CD4-positive, alpha-beta T cell (primary cell): ENCODE measurements at regions of chr3 and their contacts with region 1.

Region 1: DNA sequence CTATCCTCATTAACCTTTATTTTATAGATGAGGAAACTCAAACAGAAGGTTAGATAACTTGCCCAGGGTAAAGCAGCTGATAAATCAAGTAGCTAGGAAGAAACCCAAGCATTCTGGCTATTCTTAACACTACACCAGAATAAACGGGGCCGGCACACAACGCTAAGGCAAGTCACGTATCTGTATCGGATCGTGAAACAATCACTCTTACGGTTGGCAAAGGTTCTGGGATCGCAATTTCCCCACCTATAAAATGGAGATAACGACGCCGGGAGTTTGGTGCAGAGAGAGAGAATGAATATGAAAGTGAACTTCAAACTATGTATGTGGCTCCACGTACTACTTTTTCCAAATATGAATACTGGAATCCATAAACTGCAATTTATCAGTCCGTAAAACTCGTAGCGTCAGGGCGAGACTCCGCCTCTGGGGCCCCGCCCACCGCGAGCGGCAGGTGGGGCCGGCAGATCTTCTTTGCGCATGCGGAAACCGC is 252 bp upstream of the ARMC8 start:
- DNase-seq: peak; percentile 78 to 95 (median 88)
- ATAC-seq: peak; percentile 92
- H3K4me3 ChIP-seq: peak overlapping the region; percentile 91
- H3K4me3 Mint-ChIP-seq: peak overlapping the region; percentile 97
- H3K27ac ChIP-seq: peak overlapping the region; percentile 72 to 83
- H3K27ac Mint-ChIP-seq: peak overlapping the region; percentile 92
- H3K4me1 ChIP-seq: peaks cover 16% of the 10 kb centered on the region
- H3K4me1 Mint-ChIP-seq: peaks cover 46% of the 10 kb centered on the region
- H3K27me3 ChIP-seq: peaks cover 0 to 8% of the 10 kb centered on the region in 2 experiments
- H3K27me3 Mint-ChIP-seq: peaks cover 4% of the 10 kb centered on the region
- CTCF ChIP-seq: no peak

Region 2: GRCh38 chr3:138051946-138052802 is 134.7 kb before region 1 on chr3:
- CTCF ChIA-PET with region 1: no interaction called
- POLR2A ChIA-PET with region 1: no interaction called
- intact Hi-C with region 1: no loop called
- DNase-seq: peak in 2 of 14 experiments; percentile 7 to 8
- ATAC-seq: no peak
- H3K4me3 ChIP-seq: no peak overlapping the region
- H3K4me3 Mint-ChIP-seq: no peak overlapping the region
- H3K27ac ChIP-seq: no peak overlapping the region
- H3K27ac Mint-ChIP-seq: no peak overlapping the region
- H3K4me1 ChIP-seq: no peaks in the 10 kb centered on the region
- H3K4me1 Mint-ChIP-seq: no peaks in the 10 kb centered on the region
- H3K27me3 ChIP-seq: peaks cover 6 to 23% of the 10 kb centered on the region in 2 experiments
- H3K27me3 Mint-ChIP-seq: peaks cover 34% of the 10 kb centered on the region
- CTCF ChIP-seq: no peak

Region 3: GRCh38 chr3:138174421-138175122 is 12.3 kb before region 1 on chr3 and contains the start of gene DBR1:
- CTCF ChIA-PET with region 1: interaction called, 3 read pairs
- POLR2A ChIA-PET with region 1: interaction called, 45 read pairs
- intact Hi-C with region 1: loop called in 1 of 2 experiments (anchors 2 kb)
- DNase-seq: peak; percentile 55 to 89 (median 66)
- ATAC-seq: peak; percentile 86
- H3K4me3 ChIP-seq: peak within 1 kb of the TSS; percentile 68
- H3K4me3 Mint-ChIP-seq: peak within 1 kb of the TSS; percentile 98
- H3K27ac ChIP-seq: peak within 1 kb of the TSS; percentile 66 to 79
- H3K27ac Mint-ChIP-seq: peak within 1 kb of the TSS; percentile 96
- H3K4me1 ChIP-seq: peaks cover 19% of the 10 kb centered on the region
- H3K4me1 Mint-ChIP-seq: peaks cover 48% of the 10 kb centered on the region
- H3K27me3 ChIP-seq: no peaks in the 10 kb centered on the region
- H3K27me3 Mint-ChIP-seq: no peaks in the 10 kb centered on the region
- CTCF ChIP-seq: no peak
- total RNA-seq, gene DBR1: 23.1 to 24.6 TPM

Region 4: GRCh38 chr3:138222131-138222941 is 35.5 kb after region 1 on chr3:
- CTCF ChIA-PET with region 1: interaction called, 3 read pairs
- POLR2A ChIA-PET with region 1: interaction called, 3 read pairs
- intact Hi-C with region 1: loop called in 1 of 2 experiments (anchors 5 kb)
- DNase-seq: peak in 3 of 14 experiments; percentile 10 to 15 (median 13)
- ATAC-seq: no peak
- H3K4me3 ChIP-seq: no peak overlapping the region
- H3K4me3 Mint-ChIP-seq: no peak overlapping the region
- H3K27ac ChIP-seq: no peak overlapping the region
- H3K27ac Mint-ChIP-seq: peak overlapping the region; percentile 45
- H3K4me1 ChIP-seq: peaks cover 3% of the 10 kb centered on the region
- H3K4me1 Mint-ChIP-seq: peaks cover 50% of the 10 kb centered on the region
- H3K27me3 ChIP-seq: no peaks in the 10 kb centered on the region
- H3K27me3 Mint-ChIP-seq: no peaks in the 10 kb centered on the region
- CTCF ChIP-seq: no peak

Region 5: DNA sequence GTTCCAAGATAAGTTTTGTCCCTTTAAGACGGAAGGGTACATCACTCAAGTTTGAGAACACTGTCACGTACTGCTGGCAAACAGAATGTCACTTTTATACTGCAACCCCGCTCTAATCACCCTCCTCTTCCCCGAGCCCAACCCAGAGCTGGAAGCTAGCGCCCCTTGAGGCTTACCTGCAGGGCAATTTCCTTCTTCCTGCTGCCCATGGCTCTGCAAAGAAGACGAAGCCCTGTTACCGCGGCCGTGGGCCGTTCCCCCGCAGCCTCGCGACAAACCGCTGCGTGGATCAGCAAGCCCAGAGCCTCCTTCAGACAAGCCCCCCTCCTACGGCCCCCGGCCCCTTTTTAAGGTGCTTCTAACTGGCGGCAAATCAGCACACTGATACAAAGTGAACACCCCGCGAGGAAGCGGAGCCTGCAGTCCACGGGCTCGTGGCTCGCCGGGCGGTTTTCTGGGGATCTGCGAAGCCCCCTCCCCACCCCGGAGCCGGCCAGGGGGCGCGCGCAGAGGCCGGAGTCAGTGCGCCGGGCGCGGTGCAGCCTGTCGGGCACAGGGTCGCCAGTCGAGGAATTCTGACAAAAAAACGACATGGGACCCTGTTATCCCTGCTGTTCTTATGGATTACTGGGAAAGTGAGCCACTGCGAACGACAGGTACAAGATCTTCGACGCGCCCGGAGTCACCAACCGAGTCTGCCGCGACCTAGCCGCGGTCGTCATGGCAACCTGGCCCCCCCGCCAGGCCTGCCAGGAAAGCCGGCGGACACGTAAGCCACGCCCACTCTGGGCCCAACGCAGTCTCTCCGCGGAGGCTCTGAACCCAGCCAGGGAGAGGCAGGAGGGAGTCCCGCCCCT is 142.5 kb after region 1 on chr3 and contains the start of gene NME9:
- CTCF ChIA-PET with region 1: no interaction called
- POLR2A ChIA-PET with region 1: interaction called, 3 read pairs
- intact Hi-C with region 1: loop called (anchors 2 to 5 kb)
- DNase-seq: peak; percentile 80 to 97 (median 90)
- ATAC-seq: peak; percentile 85
- H3K4me3 ChIP-seq: peak within 1 kb of the TSS; percentile 69
- H3K4me3 Mint-ChIP-seq: peak within 1 kb of the TSS; percentile 98
- H3K27ac ChIP-seq: peak within 1 kb of the TSS; percentile 49 to 81
- H3K27ac Mint-ChIP-seq: peak within 1 kb of the TSS; percentile 88
- H3K4me1 ChIP-seq: peaks cover 20% of the 10 kb centered on the region
- H3K4me1 Mint-ChIP-seq: peaks cover 37% of the 10 kb centered on the region
- H3K27me3 ChIP-seq: no peaks in the 10 kb centered on the region
- H3K27me3 Mint-ChIP-seq: no peaks in the 10 kb centered on the region
- CTCF ChIP-seq: peak; percentile 71
- total RNA-seq, gene NME9: 0.80 TPM in 1 of 2 experiments, not detected in the other

Region 6: DNA sequence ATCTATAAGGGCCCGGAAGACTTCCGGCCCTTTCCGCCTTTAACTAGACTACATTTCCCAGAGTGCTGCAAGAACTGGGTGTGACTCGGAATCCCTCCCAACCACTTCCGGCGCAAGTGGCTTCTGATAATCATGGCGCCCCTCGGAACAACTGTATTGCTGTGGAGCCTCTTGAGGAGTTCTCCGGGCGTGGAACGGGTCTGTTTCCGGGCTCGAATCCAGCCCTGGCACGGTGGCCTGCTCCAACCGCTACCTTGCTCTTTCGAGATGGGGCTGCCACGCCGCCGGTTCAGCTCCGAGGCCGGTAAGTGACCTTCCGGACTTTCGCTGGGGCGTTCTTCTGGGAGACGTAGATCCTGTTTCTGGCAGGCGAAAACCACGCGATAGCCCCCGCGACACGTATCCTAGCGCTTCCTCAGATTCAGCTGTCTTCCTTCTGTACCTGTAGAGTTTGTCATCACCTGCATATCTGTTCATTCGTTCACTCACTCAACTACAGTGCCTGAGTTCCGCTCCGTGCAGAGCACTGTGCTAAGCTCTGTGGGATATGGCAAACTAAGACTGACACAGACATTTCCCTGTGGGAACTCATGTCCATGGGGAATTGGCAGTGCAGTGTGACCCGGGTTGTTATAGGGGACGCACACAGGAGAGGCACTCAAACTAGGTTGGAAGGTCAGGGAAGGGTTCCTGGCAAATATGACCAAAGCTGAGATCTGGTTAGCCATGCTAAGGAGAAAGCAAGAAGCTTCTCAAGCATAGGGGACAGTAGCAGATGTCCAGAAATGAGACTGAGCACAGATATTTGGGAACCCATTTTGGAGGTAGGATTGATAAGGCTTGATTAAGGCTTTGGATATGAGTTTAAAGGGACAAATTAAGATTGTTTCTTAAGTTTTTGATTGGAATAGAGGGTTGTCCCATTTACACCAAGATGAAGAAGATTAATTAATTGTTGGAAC is 1157.3 kb after region 1 on chr3 and contains the start of gene MRPS22:
- CTCF ChIA-PET with region 1: no interaction called
- POLR2A ChIA-PET with region 1: no interaction called
- intact Hi-C with region 1: loop called in 1 of 2 experiments (anchors 5 kb)
- DNase-seq: peak; percentile 64 to 92 (median 75)
- ATAC-seq: peak; percentile 98
- H3K4me3 ChIP-seq: peak within 1 kb of the TSS; percentile 92
- H3K4me3 Mint-ChIP-seq: no peak within 1 kb of the TSS
- H3K27ac ChIP-seq: peak within 1 kb of the TSS; percentile 73 to 93
- H3K27ac Mint-ChIP-seq: no peak within 1 kb of the TSS
- H3K4me1 ChIP-seq: peaks cover 21% of the 10 kb centered on the region
- H3K4me1 Mint-ChIP-seq: peaks cover 5% of the 10 kb centered on the region
- H3K27me3 ChIP-seq: no peaks in the 10 kb centered on the region
- H3K27me3 Mint-ChIP-seq: peaks cover 8% of the 10 kb centered on the region
- CTCF ChIP-seq: no peak
- total RNA-seq, gene MRPS22: 39.6 to 42.6 TPM

Region 7: DNA sequence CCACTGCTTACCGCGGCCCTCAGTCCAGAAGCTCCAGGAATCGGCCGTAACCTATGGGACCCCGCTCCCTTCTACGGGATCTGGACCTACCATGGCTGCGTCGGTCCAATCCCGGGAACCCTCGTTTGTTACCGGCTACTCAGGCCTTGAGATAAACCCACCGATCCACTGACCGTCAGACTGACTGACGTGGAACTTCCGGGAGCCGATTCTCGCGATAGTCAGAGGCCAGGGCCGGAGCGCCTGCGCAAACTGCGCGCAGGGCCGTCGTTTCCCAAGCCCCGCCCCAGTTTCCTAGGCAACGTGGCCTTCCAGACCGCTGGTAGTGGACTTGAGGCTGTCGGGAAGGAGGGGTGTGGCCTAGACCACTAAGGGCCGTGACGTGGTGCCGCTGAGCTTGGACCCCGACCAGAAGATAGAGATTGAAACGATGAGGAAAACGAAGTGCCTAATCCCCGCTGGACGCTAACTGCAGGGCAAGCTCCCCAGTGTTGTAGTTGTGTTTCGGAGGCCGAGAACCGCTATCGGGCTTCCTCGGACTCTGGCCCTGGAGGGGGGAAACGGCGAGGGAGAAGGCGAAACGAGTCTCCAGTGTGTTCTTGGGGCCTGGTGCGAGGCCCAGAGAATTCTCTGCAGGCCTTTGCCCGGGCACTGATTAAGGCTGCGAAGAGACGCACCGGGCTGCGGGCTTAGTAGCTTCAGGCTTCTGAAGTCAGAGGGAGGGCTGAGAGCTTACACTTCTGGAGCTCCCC is 1202.8 kb after region 1 on chr3 and contains the start of gene COPB2:
- CTCF ChIA-PET with region 1: no interaction called
- POLR2A ChIA-PET with region 1: no interaction called
- intact Hi-C with region 1: loop called in 1 of 2 experiments (anchors 5 kb)
- DNase-seq: peak; percentile 82 to 97 (median 94)
- ATAC-seq: peak; percentile 82
- H3K4me3 ChIP-seq: peak within 1 kb of the TSS; percentile 71
- H3K4me3 Mint-ChIP-seq: peak within 1 kb of the TSS; percentile 96
- H3K27ac ChIP-seq: peak within 1 kb of the TSS; percentile 85 to 89
- H3K27ac Mint-ChIP-seq: peak within 1 kb of the TSS; percentile 98
- H3K4me1 ChIP-seq: peaks cover 26% of the 10 kb centered on the region
- H3K4me1 Mint-ChIP-seq: peaks cover 57% of the 10 kb centered on the region
- H3K27me3 ChIP-seq: no peaks in the 10 kb centered on the region
- H3K27me3 Mint-ChIP-seq: no peaks in the 10 kb centered on the region
- CTCF ChIP-seq: no peak
- total RNA-seq, gene COPB2: 13.0 to 13.8 TPM

Region 8: GRCh38 chr3:139677388-139678155 is 1490.7 kb after region 1 on chr3 and contains the start of gene NMNAT3:
- CTCF ChIA-PET with region 1: no interaction called
- POLR2A ChIA-PET with region 1: no interaction called
- intact Hi-C with region 1: loop called in 1 of 2 experiments (anchors 5 kb)
- DNase-seq: peak; percentile 70 to 91 (median 77)
- ATAC-seq: peak; percentile 98
- H3K4me3 ChIP-seq: peak within 1 kb of the TSS; percentile 92
- H3K4me3 Mint-ChIP-seq: peak within 1 kb of the TSS; percentile 88
- H3K27ac ChIP-seq: no peak within 1 kb of the TSS
- H3K27ac Mint-ChIP-seq: no peak within 1 kb of the TSS
- H3K4me1 ChIP-seq: peaks cover 19% of the 10 kb centered on the region
- H3K4me1 Mint-ChIP-seq: peaks cover 13% of the 10 kb centered on the region
- H3K27me3 ChIP-seq: no peaks in the 10 kb centered on the region
- H3K27me3 Mint-ChIP-seq: no peaks in the 10 kb centered on the region
- CTCF ChIP-seq: no peak
- total RNA-seq, gene NMNAT3: 1.5 to 1.9 TPM